H1 (cell line): ENCODE measurements at regions of chr4 and their contacts with region 1.

Region 1: DNA sequence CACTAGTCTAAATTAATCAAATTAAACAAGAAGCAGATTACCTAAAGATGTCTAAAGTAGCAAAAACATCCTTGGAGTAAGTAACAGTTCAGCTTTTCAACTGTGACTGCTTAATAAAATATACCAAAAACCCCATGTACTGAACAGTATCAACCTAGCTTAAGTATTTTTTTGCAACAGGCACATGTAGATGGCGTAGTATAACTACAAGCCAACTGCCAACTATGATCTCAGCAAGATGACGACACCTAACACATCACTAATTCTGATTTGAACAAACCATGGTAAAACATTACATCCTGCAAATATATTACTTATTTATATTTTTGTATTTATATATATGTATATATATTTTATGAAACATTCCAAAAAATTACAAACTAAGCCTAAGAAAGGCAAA is 24.5 kb downstream of the DHX15 start:
- DNase-seq: no peak
- H3K4me3 ChIP-seq: no peak overlapping the region
- H3K27ac ChIP-seq: no peak overlapping the region
- H3K4me1 ChIP-seq: peaks cover 0 to 6% (median 2%) of the 10 kb centered on the region in 4 experiments; a peak in 3 of 7 replicates
- H3K27me3 ChIP-seq: no peaks in the 10 kb centered on the region
- CTCF ChIP-seq: no peak
- EP300 ChIP-seq: no peak
- POLR2A ChIP-seq: no peak
- RAD21 ChIP-seq: peak in 1 of 2 experiments; percentile 12; a peak in 2 of 4 replicates

Region 2: DNA sequence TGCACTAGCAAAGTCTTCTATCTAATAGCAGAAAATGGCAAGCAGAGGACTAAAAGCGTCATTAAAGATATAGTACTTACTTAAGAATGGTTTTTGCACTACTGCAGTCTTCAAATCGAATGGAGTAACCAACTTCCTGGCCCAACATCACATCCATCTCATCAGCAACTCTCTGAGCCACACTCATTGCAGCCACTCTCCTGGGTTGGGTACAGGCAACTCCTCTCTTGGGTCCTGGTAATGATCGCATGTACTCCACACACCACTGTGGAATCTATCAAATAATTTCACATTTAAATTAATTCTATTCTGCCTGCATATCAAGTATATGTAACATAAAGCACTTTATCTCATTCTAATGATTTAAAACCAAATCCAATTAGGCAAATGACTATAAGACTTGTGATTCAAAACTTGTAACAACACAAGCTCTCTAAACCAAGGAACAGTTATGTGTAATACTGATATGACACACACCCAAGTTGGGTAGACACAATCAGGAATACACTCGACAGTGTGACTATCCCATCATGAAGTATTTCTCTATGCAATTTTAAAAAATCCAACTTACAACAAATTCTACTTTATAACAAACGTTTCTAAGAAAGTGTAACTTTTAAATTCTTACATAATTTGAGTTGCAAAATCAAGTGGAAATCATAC is 10.8 kb after region 1 on chr4:
- CTCF ChIA-PET with region 1: interaction called, 8 read pairs
- POLR2A ChIA-PET with region 1: interaction called, 11 read pairs
- DNase-seq: no peak
- H3K4me3 ChIP-seq: no peak overlapping the region
- H3K27ac ChIP-seq: no peak overlapping the region
- H3K4me1 ChIP-seq: peaks cover 0 to 7% (median under 1%) of the 10 kb centered on the region in 4 experiments; a peak in 2 of 7 replicates
- H3K27me3 ChIP-seq: no peaks in the 10 kb centered on the region
- CTCF ChIP-seq: no peak
- EP300 ChIP-seq: no peak
- POLR2A ChIP-seq: no peak
- RAD21 ChIP-seq: no peak

Region 3: GRCh38 chr4:24730256-24731001 is 170.5 kb after region 1 on chr4:
- CTCF ChIA-PET with region 1: no interaction called
- POLR2A ChIA-PET with region 1: no interaction called
- DNase-seq: peak in 1 of 2 experiments; percentile 40
- H3K4me3 ChIP-seq: no peak overlapping the region
- H3K27ac ChIP-seq: no peak overlapping the region
- H3K4me1 ChIP-seq: no peaks in the 10 kb centered on the region
- H3K27me3 ChIP-seq: no peaks in the 10 kb centered on the region
- CTCF ChIP-seq: no peak
- EP300 ChIP-seq: no peak
- POLR2A ChIP-seq: no peak
- RAD21 ChIP-seq: no peak